Common myeloid progenitor, CD34-positive (primary cell): ENCODE measurements at regions of chr1 and their contacts with region 1.

Region 1: DNA sequence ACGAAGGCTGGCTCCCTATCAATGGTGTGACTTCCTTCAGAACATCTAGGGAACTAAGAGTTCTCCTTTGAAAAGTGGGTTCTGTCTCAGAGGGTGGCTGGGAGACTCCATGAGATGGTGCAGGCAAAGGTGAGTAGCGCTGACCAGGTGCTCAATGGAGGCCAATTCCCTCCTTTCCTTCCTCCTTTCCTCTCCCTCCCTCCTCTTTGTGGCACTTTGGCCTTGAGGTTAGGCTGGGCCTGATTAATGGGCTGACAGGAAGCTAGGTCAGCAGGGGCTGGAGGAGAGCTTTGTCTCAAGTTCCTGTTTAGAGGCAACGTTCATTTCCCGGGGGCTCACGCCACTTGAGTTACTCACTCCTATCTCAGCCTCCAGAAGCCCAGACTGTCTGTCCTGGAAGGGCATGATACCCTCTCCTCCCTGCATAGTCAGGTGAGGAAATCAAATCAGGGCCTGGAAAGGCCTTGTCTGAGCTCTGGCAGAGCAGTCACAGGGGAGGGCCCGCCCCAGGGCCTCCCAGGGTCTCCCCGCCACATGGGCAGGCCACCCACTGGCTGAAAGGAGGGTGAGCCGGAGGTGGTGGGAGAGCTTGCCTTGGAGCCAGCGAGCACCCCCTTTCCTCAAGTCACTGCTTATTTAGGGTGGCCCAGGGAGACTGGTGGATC is 58.4 kb upstream of the SSBP3 start:
- DNase-seq: peak in 2 of 3 donors; percentile 66 to 79
- H3K4me3 ChIP-seq: peak overlapping the region in 1 of 7 experiments; percentile 36
- H3K27ac ChIP-seq: no peak overlapping the region
- H3K4me1 ChIP-seq: peaks cover 8 to 68% (median 30%) of the 10 kb centered on the region in 4 experiments
- H3K27me3 ChIP-seq: no peaks in the 10 kb centered on the region

Region 2: GRCh38 chr1:54413295-54413694 is 51.3 kb before region 1 on chr1:
- CTCF ChIA-PET with region 1: interaction called, 13 read pairs
- POLR2A ChIA-PET with region 1: no interaction called
- DNase-seq: peak in 2 of 3 donors; percentile 45 to 47
- H3K4me3 ChIP-seq: peak overlapping the region in 1 of 7 experiments; percentile 47
- H3K27ac ChIP-seq: no peak overlapping the region
- H3K4me1 ChIP-seq: peaks cover 3 to 76% (median 56%) of the 10 kb centered on the region in 4 experiments
- H3K27me3 ChIP-seq: no peaks in the 10 kb centered on the region

Region 3: DNA sequence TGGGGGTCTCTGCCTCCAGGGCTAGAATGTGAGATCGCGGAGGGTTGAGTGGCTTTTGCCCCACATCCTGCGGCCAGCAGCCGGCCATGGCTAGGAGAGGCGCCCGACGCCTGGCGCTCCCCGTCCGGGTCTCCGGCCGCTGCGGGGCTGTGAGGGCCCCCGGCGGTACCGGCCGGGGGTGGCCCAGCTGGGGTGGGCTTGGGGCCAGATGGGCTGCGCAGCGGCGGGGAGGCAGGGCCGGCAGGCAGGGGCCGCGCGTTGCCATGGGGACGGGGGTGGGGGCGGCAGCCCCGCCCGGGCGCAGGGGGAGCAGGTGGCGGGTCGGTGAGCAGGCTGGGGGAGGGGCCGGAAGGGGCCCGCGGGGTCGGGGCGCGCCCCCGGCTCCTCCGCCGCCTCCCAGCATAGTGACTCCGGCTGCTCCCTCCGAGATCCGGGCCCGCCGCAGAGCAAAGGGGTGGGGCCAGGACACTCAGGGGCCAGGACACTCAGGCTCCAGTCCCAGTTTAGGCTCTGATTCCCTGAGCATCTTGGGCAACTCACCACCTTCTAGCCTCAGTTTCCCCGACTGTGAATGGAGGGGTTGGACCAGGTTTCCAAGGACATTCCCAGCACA is 10.1 kb after region 1 on chr1:
- CTCF ChIA-PET with region 1: interaction called, 16 read pairs
- POLR2A ChIA-PET with region 1: no interaction called
- DNase-seq: peak in 2 of 3 donors; percentile 65 to 77
- H3K4me3 ChIP-seq: peak overlapping the region in 6 of 7 experiments; percentile 43 to 73 (median 62)
- H3K27ac ChIP-seq: peak overlapping the region in 1 of 2 experiments; percentile 25
- H3K4me1 ChIP-seq: peaks cover 8 to 72% (median 48%) of the 10 kb centered on the region in 4 experiments
- H3K27me3 ChIP-seq: no peaks in the 10 kb centered on the region

Region 4: DNA sequence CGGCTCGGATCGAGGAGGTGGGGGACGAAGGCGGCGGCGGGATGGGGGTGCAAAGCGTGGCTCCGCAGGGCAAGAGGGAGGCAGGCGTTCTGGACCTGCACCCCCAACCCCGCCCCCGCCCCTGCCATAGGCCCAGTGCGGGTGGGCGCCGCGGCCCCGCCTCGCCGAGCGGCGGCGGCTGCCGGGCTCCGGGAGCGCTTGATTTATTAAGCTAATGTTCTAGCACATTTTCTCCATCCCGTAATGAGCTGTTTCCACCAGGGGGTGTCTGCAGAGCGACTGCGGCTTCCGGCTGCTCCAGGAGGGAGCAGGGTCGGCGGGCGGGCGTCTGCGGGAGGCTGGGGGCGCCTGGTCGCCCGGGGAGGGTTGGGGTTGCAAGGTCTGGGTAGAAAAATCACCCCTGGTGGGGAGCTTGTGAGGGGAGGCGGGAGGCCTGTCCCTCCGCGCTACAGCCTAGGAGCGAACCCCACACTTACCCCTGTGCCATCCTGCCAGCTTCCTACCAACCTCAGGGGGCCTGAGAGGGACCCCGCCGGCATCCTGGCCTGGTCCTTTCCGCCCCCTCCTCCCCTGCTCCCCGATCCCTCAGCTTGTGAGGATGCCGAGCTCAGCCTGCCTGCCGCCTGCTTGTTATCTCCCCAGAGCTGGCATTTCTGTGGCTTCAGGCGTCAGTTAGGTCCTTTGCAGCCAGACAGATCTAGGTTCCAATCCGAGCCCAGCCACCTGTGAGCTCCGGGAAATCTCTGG is 34.9 kb after region 1 on chr1:
- CTCF ChIA-PET with region 1: no interaction called
- POLR2A ChIA-PET with region 1: no interaction called
- DNase-seq: peak in 2 of 3 donors; percentile 79 to 83
- H3K4me3 ChIP-seq: peak overlapping the region; percentile 12 to 76 (median 48)
- H3K27ac ChIP-seq: no peak overlapping the region
- H3K4me1 ChIP-seq: peaks cover 0 to 24% (median 19%) of the 10 kb centered on the region in 4 experiments
- H3K27me3 ChIP-seq: no peaks in the 10 kb centered on the region